GM18951 (cell line): ENCODE measurements at regions of chr14 and their contacts with region 1.

Region 1: DNA sequence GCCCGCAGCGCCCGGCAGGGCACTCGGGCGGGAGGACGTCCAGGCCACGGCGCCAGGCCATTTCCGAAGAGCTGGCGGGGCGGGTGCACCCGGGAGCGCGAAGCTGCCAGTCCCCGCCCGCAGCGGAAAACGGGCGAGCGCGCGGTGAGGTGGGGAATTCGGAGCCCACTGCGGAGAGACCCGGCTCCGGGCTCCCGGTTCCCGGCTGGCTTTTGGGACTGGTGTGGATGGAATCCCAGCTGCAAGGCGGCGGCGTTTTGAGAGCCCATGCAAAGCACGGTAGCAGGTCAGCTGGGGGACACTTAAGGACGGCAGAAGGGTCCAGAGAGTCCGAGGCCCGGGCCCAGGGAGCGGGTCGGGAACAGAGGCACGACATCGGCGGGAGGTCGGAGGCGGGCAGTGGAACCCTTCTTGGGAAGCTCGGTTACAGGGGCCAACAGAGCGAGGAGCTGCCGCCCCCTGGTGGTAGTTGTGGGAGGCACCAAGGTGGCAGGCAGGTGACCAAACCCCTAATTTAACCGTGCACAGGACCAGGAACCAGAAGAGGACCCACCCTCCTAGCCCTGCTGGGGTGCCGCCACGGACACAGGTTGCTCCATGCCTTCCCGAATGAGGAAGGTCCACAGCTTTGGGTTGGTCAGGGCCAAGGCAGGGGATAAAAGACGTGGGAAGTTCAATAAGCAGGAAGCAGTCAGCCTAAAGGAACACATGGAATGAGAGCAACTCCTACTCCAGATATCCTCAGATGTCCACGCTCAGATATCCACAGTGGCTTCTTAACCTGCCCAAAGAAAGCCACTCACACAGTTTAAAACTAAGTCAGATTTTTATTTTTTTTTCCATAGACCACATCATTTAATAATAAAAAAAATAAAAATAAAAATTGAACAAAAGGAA is 685 bp upstream of the CDH24 start:
- POLR2A ChIP-seq: peak; percentile 22

Region 2: GRCh38 chr14:22570132-22570949 is 487.7 kb before region 1 on chr14:
- in situ Hi-C with region 1: loop called (anchors 25 kb)
- POLR2A ChIP-seq: no peak

Region 3: GRCh38 chr14:22994762-22995275 is 63.2 kb before region 1 on chr14:
- in situ Hi-C with region 1: loop called (anchors 5 kb)
- POLR2A ChIP-seq: no peak